ENCODE measurements at regions of chr16 and their contacts with region 1.

Region 1: GRCh38 chr16:21584817-21585216 is 14.6 kb upstream of the METTL9 start:
- DNase-seq: no peak
- H3K4me3 ChIP-seq: no peak overlapping the region
- H3K4me3 Mint-ChIP-seq: no peak overlapping the region
- H3K27ac ChIP-seq: no peak overlapping the region
- H3K27ac Mint-ChIP-seq: peak overlapping the region in 1 of 7 donors; percentile 61
- H3K4me1 ChIP-seq: peaks cover 33 to 41% of the 10 kb centered on the region in 2 donors
- H3K4me1 Mint-ChIP-seq: peaks cover 41% of the 10 kb centered on the region
- H3K27me3 ChIP-seq: no peaks in the 10 kb centered on the region
- H3K27me3 Mint-ChIP-seq: peaks cover 0 to 3% (median under 1%) of the 10 kb centered on the region in 3 donors
- CTCF ChIP-seq: no peak

Region 2: GRCh38 chr16:21626659-21627277 is 42.0 kb after region 1 on chr16:
- intact Hi-C with region 1: loop called (anchors 5 kb)
- DNase-seq: peak; percentile 93 to 98 (median 98)
- H3K4me3 ChIP-seq: peak overlapping the region in 1 of 3 experiments; percentile 44
- H3K4me3 Mint-ChIP-seq: peak overlapping the region; percentile 24 to 80
- H3K27ac ChIP-seq: peak overlapping the region; percentile 62 to 87
- H3K27ac Mint-ChIP-seq: peak overlapping the region; percentile 93 to 99 (median 98)
- H3K4me1 ChIP-seq: peaks cover 56 to 69% of the 10 kb centered on the region in 2 donors
- H3K4me1 Mint-ChIP-seq: peaks cover 68% of the 10 kb centered on the region
- H3K27me3 ChIP-seq: no peaks in the 10 kb centered on the region
- H3K27me3 Mint-ChIP-seq: peaks cover 0 to 2% (median 0%) of the 10 kb centered on the region in 3 donors
- CTCF ChIP-seq: no peak

Region 3: DNA sequence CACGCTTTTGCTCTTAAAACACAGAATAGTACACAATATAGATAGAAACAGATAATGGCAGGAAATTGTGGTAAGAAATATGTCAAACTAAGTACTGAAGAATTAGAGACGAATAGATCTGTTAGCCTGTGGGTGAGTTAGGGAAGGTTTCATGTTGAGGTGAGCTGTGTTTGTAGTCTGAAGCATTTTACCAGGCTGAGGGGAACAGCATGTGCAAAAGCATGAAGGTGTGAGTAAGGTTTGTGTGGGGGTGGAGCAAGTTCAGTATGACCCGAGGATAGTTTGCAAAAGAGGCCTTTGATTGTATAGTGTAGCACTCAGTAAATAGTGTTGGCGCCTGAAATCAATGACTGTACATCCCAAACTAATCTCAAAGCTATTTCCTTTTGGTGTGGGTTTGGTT is 53.8 kb after region 1 on chr16:
- intact Hi-C with region 1: loop called in 1 of 2 experiments (anchors 2 kb)
- DNase-seq: no peak
- H3K4me3 ChIP-seq: no peak overlapping the region
- H3K4me3 Mint-ChIP-seq: no peak overlapping the region
- H3K27ac ChIP-seq: peak overlapping the region in 1 of 2 donors; percentile 63
- H3K27ac Mint-ChIP-seq: peak overlapping the region; percentile 51 to 91 (median 76)
- H3K4me1 ChIP-seq: peaks cover 31 to 34% of the 10 kb centered on the region in 2 donors
- H3K4me1 Mint-ChIP-seq: peaks cover 28% of the 10 kb centered on the region
- H3K27me3 ChIP-seq: no peaks in the 10 kb centered on the region
- H3K27me3 Mint-ChIP-seq: no peaks in the 10 kb centered on the region
- CTCF ChIP-seq: no peak

Region 4: GRCh38 chr16:21645261-21645721 is 60.5 kb after region 1 on chr16:
- intact Hi-C with region 1: loop called in 1 of 2 experiments (anchors 2 kb)
- DNase-seq: peak in 2 of 3 donors; percentile 68 to 81
- H3K4me3 ChIP-seq: peak overlapping the region; percentile 39 to 98 (median 90)
- H3K4me3 Mint-ChIP-seq: peak overlapping the region; percentile 78 to 87
- H3K27ac ChIP-seq: peak overlapping the region; percentile 77 to 82
- H3K27ac Mint-ChIP-seq: peak overlapping the region; percentile 89 to 97 (median 95)
- H3K4me1 ChIP-seq: peaks cover 92 to 97% of the 10 kb centered on the region in 2 donors
- H3K4me1 Mint-ChIP-seq: peaks cover 71% of the 10 kb centered on the region
- H3K27me3 ChIP-seq: no peaks in the 10 kb centered on the region
- H3K27me3 Mint-ChIP-seq: no peaks in the 10 kb centered on the region
- CTCF ChIP-seq: no peak

Region 5: DNA sequence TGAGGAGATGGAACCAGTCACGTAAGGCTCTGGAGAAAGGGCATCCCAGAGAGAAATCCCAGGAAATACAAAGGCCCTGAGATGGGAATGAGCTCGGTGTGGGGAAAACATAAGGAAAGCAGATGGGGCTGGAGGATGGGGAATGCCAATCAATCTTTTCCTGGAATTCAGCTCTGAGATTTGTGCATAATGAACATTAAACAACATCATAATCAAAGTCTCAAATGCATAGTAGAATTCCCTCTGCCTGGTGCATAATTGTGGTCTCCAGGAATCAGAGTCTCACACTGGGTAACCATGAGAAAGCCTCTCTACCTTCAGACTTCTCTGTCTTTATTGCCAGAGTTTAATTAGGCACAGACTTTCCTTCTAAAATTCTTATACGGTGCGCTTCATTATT is 109.8 kb after region 1 on chr16:
- intact Hi-C with region 1: no loop called
- DNase-seq: no peak
- H3K4me3 ChIP-seq: no peak overlapping the region
- H3K4me3 Mint-ChIP-seq: no peak overlapping the region
- H3K27ac ChIP-seq: no peak overlapping the region
- H3K27ac Mint-ChIP-seq: no peak overlapping the region
- H3K4me1 ChIP-seq: no peaks in the 10 kb centered on the region
- H3K4me1 Mint-ChIP-seq: peaks cover 8% of the 10 kb centered on the region
- H3K27me3 ChIP-seq: no peaks in the 10 kb centered on the region
- H3K27me3 Mint-ChIP-seq: peaks cover 0 to 8% (median 8%) of the 10 kb centered on the region in 3 donors
- CTCF ChIP-seq: no peak